ENCODE measurements at regions of chr20 and their contacts with region 1.

Region 1: GRCh38 chr20:3820048-3820900 is at the start of gene AP5S1:
- DNase-seq: peak; percentile 67 to 95 (median 82)
- ATAC-seq: peak; percentile 84 to 88 (median 86)
- H3K4me3 ChIP-seq: peak within 1 kb of the TSS; percentile 75 to 79
- H3K4me3 Mint-ChIP-seq: peak within 1 kb of the TSS; percentile 87 to 89 (median 88)
- H3K27ac ChIP-seq: peak within 1 kb of the TSS; percentile 97
- H3K27ac Mint-ChIP-seq: peak within 1 kb of the TSS; percentile 96 to 97
- H3K4me1 ChIP-seq: peaks cover 13 to 54% of the 10 kb centered on the region in 2 experiments
- H3K4me1 Mint-ChIP-seq: peaks cover 47 to 54% (median 53%) of the 10 kb centered on the region in 3 donors
- H3K27me3 ChIP-seq: no peaks in the 10 kb centered on the region
- H3K27me3 Mint-ChIP-seq: no peaks in the 10 kb centered on the region
- total RNA-seq, gene AP5S1: 11.5 to 17.3 (median 14.4) TPM

Region 2: DNA sequence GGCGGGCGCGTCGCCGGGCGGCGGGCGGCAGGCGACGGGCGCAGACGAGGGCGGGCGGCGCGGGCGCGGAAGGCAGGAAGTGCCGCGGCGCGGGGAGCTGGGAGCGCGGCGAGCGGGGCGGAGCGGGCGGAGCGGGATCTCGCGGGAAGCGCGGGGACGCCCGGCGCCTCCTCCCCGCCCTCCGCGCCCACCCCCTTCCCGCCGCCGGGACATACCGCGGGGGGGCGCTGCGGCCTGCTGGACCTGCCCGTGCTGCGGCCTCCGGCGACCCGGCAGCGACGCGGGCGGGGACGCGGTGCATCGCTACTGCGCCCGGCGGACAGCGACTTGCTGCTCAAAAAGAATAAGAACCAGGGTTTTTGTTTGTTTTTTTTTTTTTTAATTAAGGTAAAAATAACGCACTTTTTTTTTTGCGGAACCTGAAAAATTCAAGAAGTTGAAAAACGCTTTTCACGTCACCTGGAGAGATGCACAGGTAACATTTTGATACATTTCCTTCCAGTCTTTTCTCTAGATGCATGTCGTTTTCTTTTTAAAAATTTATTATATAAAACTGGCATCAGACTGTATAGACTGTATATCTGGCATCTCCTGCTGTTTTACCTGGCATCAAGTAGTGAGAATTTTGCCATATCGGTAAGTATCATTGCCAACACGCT is 33.5 kb before region 1 on chr20 and contains the start of gene CENPB:
- CTCF ChIA-PET with region 1: interaction called in 1 of 2 experiments, 10 read pairs
- POLR2A ChIA-PET with region 1: interaction called in 1 of 2 experiments, 4 read pairs
- DNase-seq: peak; percentile 67 to 94 (median 81)
- ATAC-seq: peak; percentile 88 to 93 (median 91)
- H3K4me3 ChIP-seq: peak within 1 kb of the TSS; percentile 54 to 57
- H3K4me3 Mint-ChIP-seq: peak within 1 kb of the TSS; percentile 70 to 86 (median 75)
- H3K27ac ChIP-seq: peak within 1 kb of the TSS; percentile 76
- H3K27ac Mint-ChIP-seq: peak within 1 kb of the TSS; percentile 80 to 86
- H3K4me1 ChIP-seq: peaks cover 14 to 34% of the 10 kb centered on the region in 2 experiments
- H3K4me1 Mint-ChIP-seq: peaks cover 32 to 46% (median 42%) of the 10 kb centered on the region in 3 donors
- H3K27me3 ChIP-seq: no peaks in the 10 kb centered on the region
- H3K27me3 Mint-ChIP-seq: no peaks in the 10 kb centered on the region
- total RNA-seq, gene CENPB: 37.0 to 79.0 (median 60.8) TPM

Region 3: DNA sequence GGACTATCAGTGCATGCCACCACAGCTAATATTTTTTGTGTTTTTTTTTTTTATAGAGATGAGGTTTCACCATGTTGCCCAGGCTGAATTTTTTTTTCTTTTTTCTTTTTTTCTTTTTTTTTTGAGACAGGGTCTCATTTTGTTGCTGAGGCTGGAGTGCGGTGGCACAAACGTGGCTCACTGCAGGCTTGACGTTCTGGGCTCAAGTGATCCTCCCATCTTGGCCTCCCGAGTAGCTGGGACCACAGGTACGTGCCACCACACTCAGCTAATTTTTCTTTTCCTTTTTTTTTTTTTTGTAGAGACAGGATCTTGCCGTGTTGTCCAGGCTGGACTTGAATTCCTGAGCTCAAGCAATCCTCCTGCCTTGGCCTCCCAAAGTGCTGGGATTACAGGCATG is 10.5 kb before region 1 on chr20:
- CTCF ChIA-PET with region 1: interaction called in 1 of 2 experiments, 10 read pairs
- POLR2A ChIA-PET with region 1: interaction called, 4 to 13 read pairs
- DNase-seq: no peak
- ATAC-seq: no peak
- H3K4me3 ChIP-seq: no peak overlapping the region
- H3K4me3 Mint-ChIP-seq: peak overlapping the region in 2 of 3 donors; percentile 90 to 92
- H3K27ac ChIP-seq: peak overlapping the region; percentile 94
- H3K27ac Mint-ChIP-seq: peak overlapping the region; percentile 97 to 99
- H3K4me1 ChIP-seq: peaks cover 37 to 87% of the 10 kb centered on the region in 2 experiments
- H3K4me1 Mint-ChIP-seq: peaks cover 66 to 78% (median 75%) of the 10 kb centered on the region in 3 donors
- H3K27me3 ChIP-seq: no peaks in the 10 kb centered on the region
- H3K27me3 Mint-ChIP-seq: no peaks in the 10 kb centered on the region

Region 4: DNA sequence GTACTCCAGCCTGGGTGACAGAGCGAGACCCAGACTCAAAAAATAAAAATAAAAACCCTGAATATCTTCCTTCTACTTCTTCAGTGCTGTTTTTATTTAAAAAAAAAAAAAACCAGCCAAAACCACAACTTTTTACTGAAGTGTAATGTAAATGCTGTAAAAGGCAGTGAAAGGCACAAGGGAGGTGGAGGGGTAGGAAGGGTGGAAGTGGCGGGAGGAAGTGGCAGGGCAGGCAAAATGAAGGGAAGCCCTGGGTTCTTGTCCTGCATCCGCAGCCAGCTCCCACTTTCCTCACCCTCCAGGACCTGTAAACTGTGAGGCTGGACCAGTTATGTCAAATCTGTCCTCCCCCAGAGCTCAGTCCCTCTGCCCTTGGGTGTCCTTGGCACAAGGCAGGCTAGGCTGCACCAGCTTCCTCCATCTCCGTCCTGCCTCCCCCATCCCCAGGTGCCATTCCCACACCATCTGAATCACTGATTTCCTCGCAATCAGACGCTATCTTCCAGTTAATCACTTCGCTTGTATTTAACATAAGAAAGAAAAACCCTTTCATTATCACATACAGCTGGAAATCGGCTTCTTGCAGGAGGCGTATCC is 55.2 kb after region 1 on chr20:
- CTCF ChIA-PET with region 1: interaction called in 1 of 2 experiments, 12 read pairs
- POLR2A ChIA-PET with region 1: no interaction called
- DNase-seq: no peak
- ATAC-seq: no peak
- H3K4me3 ChIP-seq: no peak overlapping the region
- H3K4me3 Mint-ChIP-seq: no peak overlapping the region
- H3K27ac ChIP-seq: no peak overlapping the region
- H3K27ac Mint-ChIP-seq: peak overlapping the region in 1 of 2 donors; percentile 6
- H3K4me1 ChIP-seq: peaks cover 4 to 14% of the 10 kb centered on the region in 2 experiments
- H3K4me1 Mint-ChIP-seq: peaks cover 9 to 21% (median 17%) of the 10 kb centered on the region in 3 donors
- H3K27me3 ChIP-seq: no peaks in the 10 kb centered on the region
- H3K27me3 Mint-ChIP-seq: no peaks in the 10 kb centered on the region